Psoas muscle (tissue), 8 donors: ENCODE measurements at regions of chr5 and their contacts with region 1.

Region 1: DNA sequence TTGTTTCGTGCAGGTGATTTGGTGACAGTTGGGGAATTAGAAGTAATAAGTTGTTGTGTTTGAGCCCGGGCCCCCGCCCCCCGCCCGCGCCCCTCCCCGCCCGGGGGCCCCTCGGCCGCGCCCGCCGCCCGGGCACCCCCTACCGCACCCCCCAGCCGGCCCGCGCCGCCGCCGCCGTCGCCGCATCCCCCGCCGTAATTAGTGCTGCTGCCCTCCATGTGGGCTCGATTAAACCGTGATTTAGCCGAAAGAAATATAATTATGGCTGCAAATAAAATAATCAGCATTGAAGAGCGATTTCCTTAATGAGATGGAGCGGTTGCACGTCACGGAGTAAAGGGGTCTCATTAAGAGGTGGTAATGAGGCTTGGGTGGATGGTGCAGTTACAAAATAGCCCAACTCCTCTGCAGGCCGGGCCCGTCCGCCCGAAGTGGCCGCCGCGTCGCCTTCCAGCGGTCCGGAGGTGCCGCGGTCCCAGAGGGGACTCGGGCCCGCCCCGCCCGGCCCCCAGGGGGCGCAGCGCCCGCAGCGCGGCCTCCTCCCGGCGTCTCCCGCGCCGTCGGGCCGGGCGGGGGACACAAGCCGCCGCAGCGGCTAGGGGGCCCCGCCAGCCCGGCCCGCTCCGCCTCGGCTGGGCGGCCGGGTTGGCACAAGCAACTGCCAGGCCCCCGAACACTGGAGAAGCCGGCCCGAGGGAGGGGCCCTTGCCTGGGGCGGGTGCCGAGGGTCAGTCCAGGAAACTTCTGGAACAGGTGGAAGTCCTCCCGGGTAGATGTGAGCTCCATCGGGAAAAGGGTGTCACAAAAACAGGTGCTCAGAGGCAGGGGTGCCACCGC is 6.9 kb upstream of the OTP start:
- DNase-seq: peak in 1 of 2 donors; percentile 30
- ATAC-seq: peak; percentile 71 to 94 (median 86)
- H3K4me3 ChIP-seq: peak overlapping the region; percentile 48
- H3K27ac ChIP-seq: no peak overlapping the region
- H3K4me1 ChIP-seq: peaks cover 7% of the 10 kb centered on the region
- H3K27me3 ChIP-seq: peaks cover 0 to 69% (median 26%) of the 10 kb centered on the region in 3 donors
- CTCF ChIP-seq: peak; percentile 57

Region 2: GRCh38 chr5:77550406-77550805 is 95.0 kb before region 1 on chr5:
- intact Hi-C with region 1: no loop called
- DNase-seq: no peak
- ATAC-seq: no peak
- H3K4me3 ChIP-seq: no peak overlapping the region
- H3K27ac ChIP-seq: no peak overlapping the region
- H3K4me1 ChIP-seq: no peaks in the 10 kb centered on the region
- H3K27me3 ChIP-seq: no peaks in the 10 kb centered on the region
- CTCF ChIP-seq: no peak

Region 3: DNA sequence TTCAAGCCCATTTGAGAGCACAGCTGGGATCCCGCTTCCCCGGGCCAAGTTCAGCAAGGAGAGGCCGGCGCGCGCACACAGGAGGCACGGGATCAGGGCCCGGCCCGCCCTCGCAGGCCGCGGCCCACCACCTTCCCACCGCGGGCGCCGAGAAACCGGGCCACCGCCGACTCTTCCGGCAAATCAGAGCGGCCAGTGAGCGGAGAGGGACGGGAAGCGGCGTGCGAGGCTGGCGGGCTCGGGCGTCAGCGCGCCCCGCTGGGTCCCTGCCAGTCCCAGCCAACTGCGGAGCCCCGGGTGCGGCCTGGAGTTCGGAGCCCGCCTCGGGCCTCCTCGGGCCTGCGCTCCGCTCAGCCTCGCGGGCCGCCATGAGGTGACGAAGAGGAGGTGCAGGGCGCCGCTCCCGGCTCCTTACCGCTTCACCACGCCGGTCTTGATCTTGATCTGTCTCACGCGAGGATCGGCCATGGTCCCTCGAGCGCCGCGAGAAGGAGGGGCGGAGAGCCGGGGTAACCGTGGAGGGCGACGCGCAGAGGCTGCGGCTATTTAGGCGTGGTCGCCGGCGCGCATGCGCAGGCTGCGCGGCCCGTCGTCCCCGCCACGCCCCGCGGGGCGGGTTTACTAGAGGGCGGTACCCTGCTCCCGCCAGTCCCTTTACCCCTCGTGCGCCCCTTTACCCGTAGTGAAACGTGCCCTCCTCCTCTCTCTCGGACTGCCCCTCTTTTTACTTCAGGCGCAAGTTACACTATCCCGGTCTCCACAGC is 130.6 kb after region 1 on chr5 and contains the start of gene TBCA:
- intact Hi-C with region 1: loop called in 1 of 2 experiments (anchors 10 kb)
- DNase-seq: peak; percentile 85 to 94
- ATAC-seq: peak; percentile 95 to 96 (median 95)
- H3K4me3 ChIP-seq: peak within 1 kb of the TSS; percentile 67
- H3K27ac ChIP-seq: peak within 1 kb of the TSS; percentile 88
- H3K4me1 ChIP-seq: peaks cover 40% of the 10 kb centered on the region
- H3K27me3 ChIP-seq: no peaks in the 10 kb centered on the region
- CTCF ChIP-seq: no peak
- total RNA-seq, gene TBCA: 93.3 to 132 (median 117) TPM

Region 4: GRCh38 chr5:77852514-77853352 is 207.4 kb after region 1 on chr5:
- intact Hi-C with region 1: loop called in 1 of 2 experiments (anchors 10 kb)
- DNase-seq: peak; percentile 50 to 76
- ATAC-seq: peak; percentile 55 to 84 (median 70)
- H3K4me3 ChIP-seq: peak overlapping the region; percentile 72
- H3K27ac ChIP-seq: no peak overlapping the region
- H3K4me1 ChIP-seq: peaks cover 5% of the 10 kb centered on the region
- H3K27me3 ChIP-seq: peaks cover 0 to 23% (median 0%) of the 10 kb centered on the region in 3 donors
- CTCF ChIP-seq: no peak

Region 5: GRCh38 chr5:78008356-78008967 is 363.1 kb after region 1 on chr5:
- intact Hi-C with region 1: loop called (anchors 2 to 10 kb)
- DNase-seq: no peak
- ATAC-seq: peak in 1 of 4 donors; percentile 48
- H3K4me3 ChIP-seq: no peak overlapping the region
- H3K27ac ChIP-seq: no peak overlapping the region
- H3K4me1 ChIP-seq: no peaks in the 10 kb centered on the region
- H3K27me3 ChIP-seq: no peaks in the 10 kb centered on the region
- CTCF ChIP-seq: peak; percentile 71